Activated naive CD8-positive, alpha-beta T cell treated with anti-CD3 and anti-CD28 coated beads, Interleukin-2, amount 10 ng/mL, durations not matched to agents 7 days and 5 days (primary cell): ENCODE measurements at regions of chr3 and their contacts with region 1.

Region 1: DNA sequence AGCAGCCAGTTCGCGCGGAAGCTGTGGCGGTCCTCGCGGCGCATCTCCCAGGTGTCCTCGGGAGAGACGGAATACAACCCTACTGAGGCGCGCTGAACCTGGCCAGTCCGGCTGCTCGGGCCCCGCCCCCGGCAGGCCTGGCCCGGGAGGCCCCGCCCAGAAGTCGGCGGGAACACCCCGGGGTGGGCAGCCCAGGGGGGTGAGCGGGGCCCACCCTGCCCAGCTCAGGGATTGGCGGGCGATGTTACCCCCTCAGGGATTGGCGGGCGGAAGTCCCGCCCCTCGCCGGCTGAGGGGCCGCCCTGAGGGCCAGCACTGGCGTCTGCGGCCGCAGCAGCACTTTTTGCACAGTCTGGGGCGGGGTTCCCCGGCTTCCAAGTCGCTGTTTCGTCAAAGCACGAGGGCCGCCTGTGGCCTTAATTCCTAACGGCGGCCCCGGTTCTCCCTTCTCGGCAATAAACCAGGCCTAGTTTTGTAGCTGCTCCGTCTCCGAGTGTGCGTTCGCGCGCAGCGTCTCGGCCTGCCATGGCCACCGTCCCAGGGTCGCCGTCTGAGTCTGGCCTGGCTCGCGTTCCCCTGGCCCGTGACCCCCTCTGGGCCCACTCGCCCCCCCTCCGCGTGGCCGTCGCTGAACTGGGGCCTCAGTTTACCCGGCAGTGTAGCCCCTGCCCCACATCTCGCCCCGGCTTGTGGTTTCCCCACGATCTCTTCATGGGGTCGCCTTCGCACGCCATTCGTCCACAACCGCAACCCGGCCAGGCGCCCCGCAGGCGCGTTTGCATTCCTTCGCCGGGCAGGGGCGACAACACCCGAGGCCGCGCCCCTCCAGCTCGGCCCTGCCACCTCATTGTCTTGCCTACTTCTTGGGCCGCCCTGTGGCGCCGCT is 30.0 kb downstream of the NBEAL2 start:
- DNase-seq: peak; percentile 89
- ATAC-seq: peak; percentile 95
- H3K4me3 Mint-ChIP-seq: peak overlapping the region; percentile 74
- H3K27ac Mint-ChIP-seq: peak overlapping the region; percentile 79
- H3K4me1 Mint-ChIP-seq: peaks cover 17% of the 10 kb centered on the region
- H3K27me3 Mint-ChIP-seq: no peaks in the 10 kb centered on the region

Region 2: GRCh38 chr3:46987743-46988401 is 21.6 kb before region 1 on chr3:
- POLR2A ChIA-PET with region 1: interaction called, 11 read pairs
- DNase-seq: peak; percentile 92
- ATAC-seq: peak; percentile 98
- H3K4me3 Mint-ChIP-seq: peak overlapping the region; percentile 85
- H3K27ac Mint-ChIP-seq: peak overlapping the region; percentile 90
- H3K4me1 Mint-ChIP-seq: peaks cover 59% of the 10 kb centered on the region
- H3K27me3 Mint-ChIP-seq: no peaks in the 10 kb centered on the region

Region 3: GRCh38 chr3:46998121-46998851 is 11.2 kb before region 1 on chr3:
- POLR2A ChIA-PET with region 1: interaction called, 10 read pairs
- DNase-seq: peak; percentile 84
- ATAC-seq: peak; percentile 64
- H3K4me3 Mint-ChIP-seq: no peak overlapping the region
- H3K27ac Mint-ChIP-seq: peak overlapping the region; percentile 71
- H3K4me1 Mint-ChIP-seq: peaks cover 14% of the 10 kb centered on the region
- H3K27me3 Mint-ChIP-seq: no peaks in the 10 kb centered on the region

Region 4: DNA sequence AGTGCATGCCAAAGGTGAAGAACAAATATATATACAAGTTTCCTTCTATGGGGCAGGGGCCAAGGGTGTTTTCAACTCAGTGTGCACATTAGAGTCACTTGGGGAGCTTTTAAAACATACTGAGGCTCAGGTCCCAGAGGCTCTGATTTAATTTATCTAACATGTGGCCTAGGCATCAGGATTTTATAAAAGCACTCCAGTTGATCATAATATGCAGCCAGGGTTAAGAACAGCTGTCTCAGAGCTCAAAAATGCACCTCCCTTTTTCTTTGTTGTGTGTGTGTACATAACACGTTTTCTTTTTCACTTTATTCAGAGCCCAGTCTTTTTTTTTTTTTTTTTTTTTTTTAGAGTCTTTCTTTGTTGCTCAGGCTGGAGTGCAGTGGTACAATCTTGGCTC is 212.3 kb after region 1 on chr3:
- POLR2A ChIA-PET with region 1: no interaction called
- DNase-seq: no peak
- ATAC-seq: no peak
- H3K4me3 Mint-ChIP-seq: no peak overlapping the region
- H3K27ac Mint-ChIP-seq: no peak overlapping the region
- H3K4me1 Mint-ChIP-seq: peaks cover 6% of the 10 kb centered on the region
- H3K27me3 Mint-ChIP-seq: no peaks in the 10 kb centered on the region